HEK293 (cell line): ENCODE measurements at regions of chr18 and their contacts with region 1.

Region 1: DNA sequence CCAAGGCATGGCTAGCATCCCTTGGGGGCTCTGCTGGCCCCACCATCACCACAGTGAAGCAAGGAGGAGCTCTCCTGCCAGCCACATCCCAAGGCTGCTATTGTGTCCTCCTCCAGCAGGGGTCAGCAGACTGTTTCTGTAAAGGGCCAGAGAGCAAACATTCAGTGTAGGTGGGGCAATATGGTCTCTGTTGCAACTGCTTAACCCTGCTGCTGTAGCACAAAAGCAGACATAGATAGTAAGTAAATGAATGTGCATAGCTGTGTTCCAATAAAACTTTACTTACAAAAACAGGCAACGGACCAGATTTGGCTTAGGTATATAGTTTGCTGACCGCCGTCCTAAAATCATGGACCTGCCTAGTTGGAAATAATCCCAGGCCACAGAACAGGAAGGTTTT is 36.4 kb upstream of the ZBTB7C start:
- H3K4me3 ChIP-seq: no peak overlapping the region
- H3K27ac ChIP-seq: no peak overlapping the region
- H3K4me1 ChIP-seq: no peaks in the 10 kb centered on the region; the same call in 1 of the 2 replicates
- CTCF ChIP-seq: peak; percentile 71

Region 2: GRCh38 chr18:48037481-48038271 is 407.9 kb before region 1 on chr18:
- CTCF ChIA-PET with region 1: interaction called, 206 read pairs
- POLR2A ChIA-PET with region 1: no interaction called
- H3K4me3 ChIP-seq: no peak overlapping the region
- H3K27ac ChIP-seq: no peak overlapping the region
- H3K4me1 ChIP-seq: no peaks in the 10 kb centered on the region
- CTCF ChIP-seq: no peak

Region 3: DNA sequence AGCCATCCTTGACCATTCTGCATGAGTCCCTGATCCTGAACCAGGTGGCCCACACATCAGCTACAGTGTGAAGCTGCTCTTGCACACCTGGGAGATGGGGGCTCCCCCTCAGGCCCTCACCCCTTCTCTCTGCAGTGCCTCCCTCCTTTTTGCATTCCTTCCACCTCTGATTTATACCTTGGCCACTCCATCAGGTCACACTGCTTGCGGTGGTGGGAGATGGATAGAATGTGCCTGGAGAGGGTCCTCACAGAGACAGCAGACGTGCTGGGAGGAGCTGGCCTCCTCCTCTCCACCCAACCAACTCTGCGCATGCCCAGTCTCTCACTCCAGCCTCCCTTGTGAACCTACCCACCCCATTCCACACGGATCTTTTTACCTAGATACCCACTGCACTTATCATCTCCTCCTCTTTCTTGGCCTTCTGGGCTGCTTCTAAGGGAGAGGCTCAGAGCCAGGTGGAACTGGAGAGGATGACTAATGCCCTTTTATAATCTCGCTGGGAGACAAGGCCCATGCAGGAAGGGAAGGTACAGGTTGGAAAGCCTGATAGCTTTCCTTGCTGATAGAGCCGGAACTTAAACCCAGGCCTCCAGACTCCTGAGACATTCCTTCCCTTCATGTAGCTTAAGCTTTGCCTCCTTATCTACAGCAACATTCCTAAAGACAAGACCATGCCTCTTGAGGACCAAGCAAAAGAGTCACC is 241.4 kb before region 1 on chr18:
- CTCF ChIA-PET with region 1: interaction called, 11 read pairs
- POLR2A ChIA-PET with region 1: no interaction called
- H3K4me3 ChIP-seq: no peak overlapping the region
- H3K27ac ChIP-seq: no peak overlapping the region
- H3K4me1 ChIP-seq: peaks cover 16% of the 10 kb centered on the region
- CTCF ChIP-seq: no peak

Region 4: GRCh38 chr18:48238206-48238605 is 207.3 kb before region 1 on chr18:
- CTCF ChIA-PET with region 1: interaction called, 18 read pairs
- POLR2A ChIA-PET with region 1: no interaction called
- H3K4me3 ChIP-seq: no peak overlapping the region
- H3K27ac ChIP-seq: no peak overlapping the region
- H3K4me1 ChIP-seq: 0 out of 2 replicates have a peak, but pooled peaks cover 4% of the 10 kb centered on the region
- CTCF ChIP-seq: no peak

Region 5: GRCh38 chr18:48410095-48410920 is 35.2 kb before region 1 on chr18:
- CTCF ChIA-PET with region 1: interaction called, 18 read pairs
- POLR2A ChIA-PET with region 1: interaction called, 3 read pairs
- H3K4me3 ChIP-seq: peak overlapping the region; percentile 51
- H3K27ac ChIP-seq: peak overlapping the region; percentile 68; the same call in 1 of the 2 replicates
- H3K4me1 ChIP-seq: peaks cover 5% of the 10 kb centered on the region
- CTCF ChIP-seq: no peak

Region 6: GRCh38 chr18:48428475-48429177 is 16.9 kb before region 1 on chr18:
- CTCF ChIA-PET with region 1: interaction called, 66 read pairs
- POLR2A ChIA-PET with region 1: no interaction called
- H3K4me3 ChIP-seq: no peak overlapping the region
- H3K27ac ChIP-seq: no peak overlapping the region
- H3K4me1 ChIP-seq: no peaks in the 10 kb centered on the region
- CTCF ChIP-seq: no peak

Region 7: DNA sequence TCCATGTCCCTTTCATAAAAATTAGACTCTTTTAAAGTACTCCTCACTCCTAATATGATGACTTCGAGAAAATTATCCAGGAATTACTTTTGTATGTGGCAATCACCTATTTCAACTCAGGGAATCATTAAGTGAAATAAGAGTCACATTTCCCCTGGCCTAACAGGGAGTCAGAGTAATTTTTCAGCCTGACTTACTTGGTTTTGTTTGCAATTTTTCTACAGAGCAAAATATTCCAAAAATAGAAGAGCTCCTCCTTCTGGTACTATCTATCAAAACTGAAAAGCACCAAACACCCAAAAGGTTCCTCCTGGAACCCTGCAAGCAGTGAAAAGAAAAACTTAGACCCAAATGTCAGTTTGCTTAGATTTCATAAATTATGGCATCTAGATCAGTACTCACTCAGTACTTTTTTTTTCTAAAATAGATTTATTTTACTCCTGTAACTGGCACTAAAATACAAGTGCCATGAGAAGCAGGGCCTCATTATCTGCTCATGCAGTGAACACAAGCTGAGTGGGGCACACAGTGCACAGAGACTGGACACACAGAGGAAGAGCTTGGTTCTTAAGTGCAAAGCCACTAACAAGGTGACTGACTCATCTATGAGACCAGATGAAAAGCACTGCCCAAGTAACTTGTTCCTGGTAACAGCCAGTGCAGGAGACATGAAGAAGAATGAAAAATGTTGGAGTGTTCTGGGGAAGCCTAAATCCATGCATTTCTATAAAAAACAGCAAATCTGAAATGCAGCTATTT is 1339.1 kb after region 1 on chr18:
- CTCF ChIA-PET with region 1: no interaction called
- POLR2A ChIA-PET with region 1: no interaction called
- H3K4me3 ChIP-seq: no peak overlapping the region
- H3K27ac ChIP-seq: no peak overlapping the region
- H3K4me1 ChIP-seq: no peaks in the 10 kb centered on the region
- CTCF ChIP-seq: no peak